ENCODE measurements at regions of chr1 and their contacts with region 1.

Region 1: DNA sequence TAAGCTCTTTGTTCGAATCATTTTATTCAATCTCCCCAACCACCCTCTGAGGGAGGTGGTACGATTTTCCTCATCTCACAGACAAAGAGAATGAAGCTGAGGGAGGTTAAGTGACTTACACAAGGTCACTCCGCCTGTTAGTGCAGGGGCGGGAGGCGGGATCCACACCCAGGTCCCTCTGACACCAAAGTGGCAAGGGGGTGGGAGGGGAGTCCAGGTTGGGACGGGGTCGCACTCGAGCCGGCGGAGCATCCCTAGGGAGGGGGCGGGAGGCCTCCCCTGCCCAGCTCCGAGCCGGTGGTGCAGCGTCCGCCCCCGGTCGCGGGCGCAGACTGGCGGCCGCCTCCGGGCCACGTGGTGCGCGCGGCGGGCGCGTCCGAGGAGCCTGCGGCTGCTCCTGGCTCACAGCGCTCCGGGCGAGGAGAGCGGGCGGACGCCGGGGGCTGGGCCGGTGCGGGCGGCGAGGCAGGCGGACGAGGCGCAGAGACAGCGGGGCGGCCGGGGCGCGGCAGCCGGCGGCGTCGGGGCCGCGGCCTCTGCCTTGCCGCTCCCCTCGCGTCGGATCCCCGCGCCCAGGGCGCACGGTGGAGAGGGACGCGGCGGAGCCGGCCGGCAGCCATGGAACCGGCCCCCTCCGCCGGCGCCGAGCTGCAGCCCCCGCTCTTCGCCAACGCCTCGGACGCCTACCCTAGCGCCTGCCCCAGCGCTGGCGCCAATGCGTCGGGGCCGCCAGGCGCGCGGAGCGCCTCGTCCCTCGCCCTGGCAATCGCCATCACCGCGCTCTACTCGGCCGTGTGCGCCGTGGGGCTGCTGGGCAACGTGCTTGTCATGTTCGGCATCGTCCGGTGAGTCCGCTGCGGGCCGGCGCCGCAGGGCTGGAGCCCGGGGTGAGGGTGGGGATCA is at the start of gene OPRD1:
- DNase-seq: no peak
- ATAC-seq: no peak
- total RNA-seq, gene OPRD1: not detected

Region 2: DNA sequence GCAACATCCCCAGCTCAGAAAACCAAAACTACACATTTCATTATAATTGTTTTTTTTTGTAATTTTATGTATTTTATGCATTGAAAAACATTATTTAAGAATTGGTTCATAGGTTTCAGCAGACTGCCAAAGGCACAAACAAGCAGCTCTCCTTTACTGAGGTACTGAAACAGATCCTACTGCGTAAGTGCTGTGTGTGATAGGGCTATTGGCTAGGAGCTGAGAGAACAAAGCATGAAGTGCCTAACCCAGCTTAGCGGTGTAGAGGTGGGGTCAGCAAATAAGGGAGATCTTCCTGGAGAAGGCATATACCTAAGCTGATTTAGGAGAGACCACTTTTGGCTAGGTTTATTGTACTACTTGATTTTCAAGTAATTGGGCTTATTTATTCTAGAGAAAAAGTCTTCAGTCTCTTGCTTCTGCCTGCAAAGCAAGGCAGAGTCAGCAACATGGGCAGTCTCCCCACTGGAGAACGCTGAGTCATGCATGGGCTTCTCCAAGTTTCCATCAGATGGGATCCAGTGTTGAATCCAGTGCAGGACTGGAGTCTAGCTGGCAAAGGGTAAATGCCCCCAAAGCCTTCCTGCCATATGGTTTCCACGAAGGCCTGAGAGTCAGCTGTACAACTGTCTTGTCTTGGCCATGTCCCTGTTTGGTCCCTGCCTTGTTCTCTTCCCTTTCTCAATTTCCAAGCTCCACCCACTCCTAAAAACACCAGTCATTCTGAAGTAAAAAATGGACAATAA is 93.3 kb before region 1 on chr1:
- intact Hi-C with region 1: no loop called
- DNase-seq: peak; percentile 26
- ATAC-seq: peak in 1 of 2 donors; percentile 53

Region 3: DNA sequence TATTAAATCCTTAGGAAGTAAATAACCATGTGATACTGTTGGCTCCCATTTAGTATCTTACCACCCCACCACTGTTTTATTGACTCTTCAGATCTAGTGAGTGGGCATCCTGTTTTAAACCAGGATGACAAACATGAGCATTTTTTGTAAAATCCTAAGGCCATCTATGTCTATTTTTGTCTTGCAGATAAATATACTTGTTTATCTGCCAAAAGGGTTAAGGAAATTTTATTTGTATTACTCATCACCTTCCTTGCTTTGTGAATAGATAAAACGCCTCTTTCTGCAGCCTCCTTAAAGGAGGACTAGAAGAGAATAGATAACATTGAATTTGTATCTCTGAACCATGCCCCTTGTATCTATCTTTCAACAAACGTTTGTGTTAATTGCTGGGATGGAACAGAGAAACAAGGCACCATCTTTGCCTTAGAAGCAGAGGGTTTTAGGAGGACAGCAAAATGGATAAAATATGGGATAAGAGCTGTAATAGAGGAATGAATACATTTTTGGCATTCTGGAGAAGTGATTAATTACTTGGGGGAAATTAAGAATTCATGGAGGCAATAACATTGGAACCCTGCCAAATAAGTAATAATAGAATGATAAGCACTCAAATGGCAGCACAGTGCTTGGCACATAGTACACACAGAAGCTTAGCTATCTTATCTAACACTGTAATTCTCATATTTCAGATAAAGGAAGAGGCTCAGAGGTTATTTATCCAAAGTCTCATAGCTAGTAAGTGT is 60.5 kb before region 1 on chr1:
- intact Hi-C with region 1: no loop called
- DNase-seq: no peak
- ATAC-seq: peak in 1 of 2 donors; percentile 35

Region 4: GRCh38 chr1:28860332-28861073 is 48.5 kb after region 1 on chr1:
- intact Hi-C with region 1: loop called in 1 of 2 experiments (anchors 10 kb)
- DNase-seq: no peak
- ATAC-seq: no peak